ENCODE measurements at regions of chr11 and their contacts with region 1.

Region 1: GRCh38 chr11:3929649-3930048 is 74.2 kb downstream of the STIM1 start:
- DNase-seq: no peak
- ATAC-seq: no peak
- H3K4me3 ChIP-seq: no peak overlapping the region
- H3K27ac ChIP-seq: no peak overlapping the region
- H3K4me1 ChIP-seq: peaks cover 14% of the 10 kb centered on the region
- H3K27me3 ChIP-seq: no peaks in the 10 kb centered on the region
- CTCF ChIP-seq: no peak
- EP300 ChIP-seq: no peak
- POLR2A ChIP-seq: no peak
- RAD21 ChIP-seq: no peak

Region 2: GRCh38 chr11:3867209-3868091 is 62.2 kb before region 1 on chr11:
- CTCF ChIA-PET with region 1: interaction called, 11 read pairs
- POLR2A ChIA-PET with region 1: no interaction called
- RAD21 ChIA-PET with region 1: interaction called, 5 read pairs
- SMC1A ChIA-PET with region 1: interaction called, 14 read pairs
- in situ Hi-C with region 1: no loop called
- intact Hi-C with region 1: no loop called
- DNase-seq: peak; percentile 66
- ATAC-seq: peak; percentile 57
- H3K4me3 ChIP-seq: peak overlapping the region; percentile 28; the same call in 1 of the 2 replicates
- H3K27ac ChIP-seq: peak overlapping the region; percentile 82
- H3K4me1 ChIP-seq: peaks cover 65% of the 10 kb centered on the region
- H3K27me3 ChIP-seq: no peaks in the 10 kb centered on the region
- CTCF ChIP-seq: no peak
- EP300 ChIP-seq: no peak
- POLR2A ChIP-seq: no peak
- RAD21 ChIP-seq: no peak

Region 3: DNA sequence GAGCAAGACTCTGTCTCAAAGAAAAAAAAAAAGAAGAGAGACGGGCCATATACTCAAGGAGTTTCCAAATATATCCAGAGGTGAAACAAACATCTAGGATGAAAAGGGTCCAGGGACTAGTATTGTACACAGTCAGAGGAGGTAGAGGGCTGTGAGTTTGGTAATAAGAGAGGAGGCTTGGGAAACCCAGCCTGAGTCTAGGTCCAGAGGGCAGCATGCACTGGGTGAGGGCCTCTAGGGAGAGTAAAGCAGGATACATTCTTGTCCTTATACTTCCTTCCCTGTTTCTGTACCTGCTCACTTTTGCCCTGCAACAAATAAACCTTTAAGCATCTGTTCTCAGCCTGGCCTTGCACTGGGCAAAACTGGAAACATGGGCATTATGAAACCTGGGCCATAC is 42.7 kb before region 1 on chr11:
- CTCF ChIA-PET with region 1: interaction called, 3 read pairs
- POLR2A ChIA-PET with region 1: interaction called, 3 read pairs
- RAD21 ChIA-PET with region 1: interaction called, 3 read pairs
- SMC1A ChIA-PET with region 1: interaction called, 19 read pairs
- in situ Hi-C with region 1: no loop called
- intact Hi-C with region 1: no loop called
- DNase-seq: no peak
- ATAC-seq: no peak
- H3K4me3 ChIP-seq: no peak overlapping the region
- H3K27ac ChIP-seq: no peak overlapping the region
- H3K4me1 ChIP-seq: peaks cover 28% of the 10 kb centered on the region
- H3K27me3 ChIP-seq: no peaks in the 10 kb centered on the region
- CTCF ChIP-seq: no peak
- EP300 ChIP-seq: no peak
- POLR2A ChIP-seq: no peak
- RAD21 ChIP-seq: no peak

Region 4: GRCh38 chr11:3947061-3947460 is 17.4 kb after region 1 on chr11:
- CTCF ChIA-PET with region 1: interaction called, 9 read pairs
- POLR2A ChIA-PET with region 1: interaction called, 5 read pairs
- RAD21 ChIA-PET with region 1: interaction called, 6 read pairs
- SMC1A ChIA-PET with region 1: interaction called, 24 read pairs
- in situ Hi-C with region 1: no loop called
- intact Hi-C with region 1: no loop called
- DNase-seq: peak; percentile 76
- ATAC-seq: peak; percentile 78
- H3K4me3 ChIP-seq: 0 out of 2 replicates have a peak overlapping the region, but pooled peaks have one; percentile 19
- H3K27ac ChIP-seq: peak overlapping the region; percentile 52
- H3K4me1 ChIP-seq: peaks cover 55% of the 10 kb centered on the region
- H3K27me3 ChIP-seq: no peaks in the 10 kb centered on the region
- CTCF ChIP-seq: no peak
- EP300 ChIP-seq: no peak
- POLR2A ChIP-seq: no peak
- RAD21 ChIP-seq: no peak

Region 5: GRCh38 chr11:4065601-4066377 is 136.1 kb after region 1 on chr11:
- CTCF ChIA-PET with region 1: interaction called, 11 read pairs
- POLR2A ChIA-PET with region 1: no interaction called
- RAD21 ChIA-PET with region 1: interaction called, 4 read pairs
- SMC1A ChIA-PET with region 1: interaction called, 5 read pairs
- in situ Hi-C with region 1: no loop called
- intact Hi-C with region 1: no loop called
- DNase-seq: no peak
- ATAC-seq: no peak
- H3K4me3 ChIP-seq: no peak overlapping the region
- H3K27ac ChIP-seq: no peak overlapping the region
- H3K4me1 ChIP-seq: peaks cover 6% of the 10 kb centered on the region; the same call in 1 of the 2 replicates
- H3K27me3 ChIP-seq: no peaks in the 10 kb centered on the region
- CTCF ChIP-seq: no peak
- EP300 ChIP-seq: no peak
- POLR2A ChIP-seq: no peak
- RAD21 ChIP-seq: no peak

Measured in GM12878 (cell line).